Naive thymus-derived CD4-positive, alpha-beta T cell (primary cell): ENCODE measurements at regions of chr14 and their contacts with region 1.

Region 1: GRCh38 chr14:77301103-77301502 is 19.6 kb downstream of the POMT2 start:
- DNase-seq: peak in 8 of 9 donors; percentile 23 to 64 (median 40)
- ATAC-seq: peak; percentile 62
- H3K4me3 ChIP-seq: no peak overlapping the region
- H3K4me3 Mint-ChIP-seq: no peak overlapping the region
- H3K27ac ChIP-seq: no peak overlapping the region
- H3K27ac Mint-ChIP-seq: no peak overlapping the region
- H3K4me1 ChIP-seq: no peaks in the 10 kb centered on the region
- H3K4me1 Mint-ChIP-seq: peaks cover 0 to 15% (median 0%) of the 10 kb centered on the region in 7 donors
- H3K27me3 ChIP-seq: no peaks in the 10 kb centered on the region
- H3K27me3 Mint-ChIP-seq: no peaks in the 10 kb centered on the region

Region 2: DNA sequence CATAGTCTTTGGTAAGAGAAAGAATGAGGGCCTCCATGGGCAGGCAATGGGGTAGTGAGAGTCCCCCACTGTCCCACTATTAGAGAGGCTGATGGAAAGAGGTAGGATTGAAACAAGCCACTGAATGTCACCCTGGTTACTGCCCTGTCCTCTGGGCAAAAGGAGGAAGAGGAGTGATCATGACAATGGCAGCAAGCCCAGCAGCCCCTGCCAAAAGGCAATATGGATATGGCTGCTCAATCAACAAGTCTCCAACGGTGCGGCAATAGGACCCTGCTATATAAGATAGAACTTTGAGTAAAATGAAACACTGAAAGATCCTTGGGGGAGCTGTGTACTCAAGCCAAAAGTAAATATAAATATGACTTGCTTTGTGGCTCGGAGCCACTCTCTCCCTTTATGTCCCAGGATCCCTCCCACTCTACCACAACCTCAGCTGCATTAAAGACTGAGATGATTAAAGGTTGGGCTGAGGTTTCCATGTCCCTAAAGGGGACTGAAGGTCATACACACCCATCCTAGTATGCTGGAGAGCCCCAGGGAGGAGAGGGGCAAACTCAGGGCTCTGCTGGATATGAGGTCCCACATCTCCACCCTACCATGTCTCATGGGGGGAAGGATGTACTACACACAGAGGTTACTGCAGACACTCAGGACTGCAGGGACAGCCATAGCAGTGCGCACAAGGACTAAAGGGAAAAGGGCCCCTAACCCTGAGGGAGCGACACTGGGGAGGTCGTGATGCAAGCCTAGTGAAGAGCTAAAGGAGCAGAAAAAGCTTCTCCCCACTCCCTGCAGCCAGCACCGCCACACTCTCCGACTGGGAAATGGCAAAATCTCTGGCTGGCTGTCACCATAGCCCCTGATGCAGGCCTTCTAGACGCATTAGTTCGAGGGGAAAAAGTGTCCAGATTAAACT is 13.7 kb after region 1 on chr14:
- CTCF ChIA-PET with region 1: interaction called, 11 read pairs
- POLR2A ChIA-PET with region 1: no interaction called
- intact Hi-C with region 1: loop called (anchors 1 kb)
- DNase-seq: no peak
- ATAC-seq: no peak
- H3K4me3 ChIP-seq: no peak overlapping the region
- H3K4me3 Mint-ChIP-seq: no peak overlapping the region
- H3K27ac ChIP-seq: no peak overlapping the region
- H3K27ac Mint-ChIP-seq: no peak overlapping the region
- H3K4me1 ChIP-seq: peaks cover 0 to 2% of the 10 kb centered on the region in 2 donors
- H3K4me1 Mint-ChIP-seq: peaks cover under 1 to 4% (median 1%) of the 10 kb centered on the region in 7 donors
- H3K27me3 ChIP-seq: no peaks in the 10 kb centered on the region
- H3K27me3 Mint-ChIP-seq: no peaks in the 10 kb centered on the region

Region 3: DNA sequence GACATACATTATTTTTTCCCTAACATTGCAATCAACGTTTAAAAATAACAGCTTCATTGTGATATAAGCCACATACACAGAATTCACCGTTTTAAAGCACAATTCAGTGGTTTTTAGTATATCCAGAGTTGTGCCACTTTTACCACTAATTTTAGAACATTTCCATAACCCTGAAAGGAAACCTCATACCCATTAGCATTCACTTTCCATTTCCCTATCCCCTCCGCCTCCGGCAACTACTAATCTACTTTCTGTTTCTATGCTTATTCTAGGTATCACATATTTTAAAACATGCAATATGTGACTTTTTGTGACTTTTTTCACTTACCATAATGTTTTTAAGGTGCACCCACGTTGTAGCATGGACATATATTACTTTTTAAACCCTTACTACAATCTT is 253.1 kb after region 1 on chr14:
- CTCF ChIA-PET with region 1: no interaction called
- POLR2A ChIA-PET with region 1: no interaction called
- intact Hi-C with region 1: loop called in 1 of 2 experiments (anchors 5 kb)
- DNase-seq: no peak
- ATAC-seq: peak; percentile 40
- H3K4me3 ChIP-seq: no peak overlapping the region
- H3K4me3 Mint-ChIP-seq: peak overlapping the region in 1 of 10 donors; percentile 77
- H3K27ac ChIP-seq: no peak overlapping the region
- H3K27ac Mint-ChIP-seq: peak overlapping the region in 4 of 9 donors; percentile 2 to 89 (median 26)
- H3K4me1 ChIP-seq: no peaks in the 10 kb centered on the region
- H3K4me1 Mint-ChIP-seq: peaks cover 0 to 27% (median 6%) of the 10 kb centered on the region in 7 donors
- H3K27me3 ChIP-seq: no peaks in the 10 kb centered on the region
- H3K27me3 Mint-ChIP-seq: no peaks in the 10 kb centered on the region

Region 4: DNA sequence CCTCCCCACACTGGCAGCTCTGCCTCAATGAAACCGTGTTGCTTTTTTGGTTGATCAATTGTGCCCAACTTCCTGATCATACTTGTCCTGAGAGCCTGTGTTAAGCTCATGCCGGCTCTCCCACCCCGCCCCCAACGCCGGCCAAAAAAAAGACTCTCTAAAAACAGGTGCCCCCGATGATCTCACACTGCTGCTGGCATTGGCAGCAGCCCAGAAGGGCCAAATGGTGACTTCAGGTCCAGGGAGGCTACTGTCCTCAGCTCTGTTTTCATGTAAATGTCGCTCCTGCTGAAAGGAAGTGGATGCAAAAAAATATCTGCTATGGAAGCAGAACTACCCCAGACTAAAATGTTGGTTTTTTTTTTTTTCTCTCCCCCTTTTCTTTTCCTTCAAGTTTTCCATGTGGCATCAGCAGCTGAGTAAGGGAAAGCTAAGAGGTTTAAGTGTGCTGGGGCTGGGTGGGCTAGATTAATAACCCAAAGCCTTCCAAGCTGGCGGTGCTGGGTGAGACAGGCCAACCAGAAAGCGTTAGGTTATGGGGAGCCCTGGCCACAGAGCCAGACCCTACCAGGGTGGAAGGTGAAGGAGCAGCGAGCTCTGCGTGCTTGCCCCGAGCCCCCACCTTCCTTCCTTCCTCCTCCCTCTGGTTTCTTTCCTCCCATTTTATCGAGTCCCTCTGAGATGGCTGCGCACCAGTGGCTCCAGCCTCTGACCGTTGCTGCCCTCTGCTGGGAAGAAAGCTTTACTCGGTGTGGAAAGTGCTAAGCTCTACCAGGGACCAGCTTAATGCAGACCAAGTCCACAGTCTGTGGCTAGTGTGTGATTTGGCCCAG is 1265.1 kb after region 1 on chr14:
- CTCF ChIA-PET with region 1: no interaction called
- POLR2A ChIA-PET with region 1: no interaction called
- intact Hi-C with region 1: loop called in 1 of 2 experiments (anchors 10 kb)
- DNase-seq: peak in 8 of 9 donors; percentile 21 to 53 (median 26)
- ATAC-seq: peak; percentile 87
- H3K4me3 ChIP-seq: peak overlapping the region; percentile 26
- H3K4me3 Mint-ChIP-seq: peak overlapping the region in 9 of 10 donors; percentile 27 to 74 (median 53)
- H3K27ac ChIP-seq: no peak overlapping the region
- H3K27ac Mint-ChIP-seq: no peak overlapping the region
- H3K4me1 ChIP-seq: no peaks in the 10 kb centered on the region
- H3K4me1 Mint-ChIP-seq: peaks cover 0 to 11% (median 9%) of the 10 kb centered on the region in 7 donors
- H3K27me3 ChIP-seq: no peaks in the 10 kb centered on the region
- H3K27me3 Mint-ChIP-seq: peaks cover 0 to 4% (median 0%) of the 10 kb centered on the region in 5 donors

Region 5: GRCh38 chr14:78598041-78598920 is 1297.2 kb after region 1 on chr14:
- CTCF ChIA-PET with region 1: no interaction called
- POLR2A ChIA-PET with region 1: no interaction called
- intact Hi-C with region 1: loop called in 1 of 2 experiments (anchors 5 kb)
- DNase-seq: peak in 6 of 9 donors; percentile 3 to 23 (median 18)
- ATAC-seq: peak; percentile 53
- H3K4me3 ChIP-seq: no peak overlapping the region
- H3K4me3 Mint-ChIP-seq: no peak overlapping the region
- H3K27ac ChIP-seq: no peak overlapping the region
- H3K27ac Mint-ChIP-seq: no peak overlapping the region
- H3K4me1 ChIP-seq: no peaks in the 10 kb centered on the region
- H3K4me1 Mint-ChIP-seq: no peaks in the 10 kb centered on the region
- H3K27me3 ChIP-seq: no peaks in the 10 kb centered on the region
- H3K27me3 Mint-ChIP-seq: peaks cover 0 to 35% (median 10%) of the 10 kb centered on the region in 5 donors